A549 (cell line): ENCODE measurements at regions of chr6 and their contacts with region 1.

Region 1: DNA sequence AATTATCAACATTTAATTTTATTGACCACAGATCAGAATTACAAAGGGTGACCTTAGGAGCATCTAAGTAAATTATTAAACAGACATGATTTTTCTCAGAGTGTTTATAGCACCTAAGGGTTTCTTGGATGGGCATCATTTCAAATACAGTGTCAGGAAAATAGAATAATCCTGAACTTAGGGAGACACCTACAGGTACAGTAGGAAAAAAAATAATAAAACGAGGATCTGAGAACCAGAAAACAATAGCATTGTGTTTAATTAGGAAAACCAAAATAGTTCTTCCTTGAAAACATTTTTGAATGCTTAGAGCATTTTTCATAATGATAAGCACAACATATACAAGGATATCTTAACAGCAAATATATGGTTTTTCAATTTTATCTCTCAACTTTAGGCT is 39.2 kb downstream of the MMUT start:
- DNase-seq: peak; percentile 4
- ATAC-seq: no peak
- H3K4me3 ChIP-seq: no peak overlapping the region
- H3K27ac ChIP-seq: no peak overlapping the region
- H3K4me1 ChIP-seq: no peaks in the 10 kb centered on the region
- CTCF ChIP-seq: peak; percentile 54
- EP300 ChIP-seq: no peak
- POLR2A ChIP-seq: no peak
- RAD21 ChIP-seq: peak; percentile 57 to 66

Region 2: DNA sequence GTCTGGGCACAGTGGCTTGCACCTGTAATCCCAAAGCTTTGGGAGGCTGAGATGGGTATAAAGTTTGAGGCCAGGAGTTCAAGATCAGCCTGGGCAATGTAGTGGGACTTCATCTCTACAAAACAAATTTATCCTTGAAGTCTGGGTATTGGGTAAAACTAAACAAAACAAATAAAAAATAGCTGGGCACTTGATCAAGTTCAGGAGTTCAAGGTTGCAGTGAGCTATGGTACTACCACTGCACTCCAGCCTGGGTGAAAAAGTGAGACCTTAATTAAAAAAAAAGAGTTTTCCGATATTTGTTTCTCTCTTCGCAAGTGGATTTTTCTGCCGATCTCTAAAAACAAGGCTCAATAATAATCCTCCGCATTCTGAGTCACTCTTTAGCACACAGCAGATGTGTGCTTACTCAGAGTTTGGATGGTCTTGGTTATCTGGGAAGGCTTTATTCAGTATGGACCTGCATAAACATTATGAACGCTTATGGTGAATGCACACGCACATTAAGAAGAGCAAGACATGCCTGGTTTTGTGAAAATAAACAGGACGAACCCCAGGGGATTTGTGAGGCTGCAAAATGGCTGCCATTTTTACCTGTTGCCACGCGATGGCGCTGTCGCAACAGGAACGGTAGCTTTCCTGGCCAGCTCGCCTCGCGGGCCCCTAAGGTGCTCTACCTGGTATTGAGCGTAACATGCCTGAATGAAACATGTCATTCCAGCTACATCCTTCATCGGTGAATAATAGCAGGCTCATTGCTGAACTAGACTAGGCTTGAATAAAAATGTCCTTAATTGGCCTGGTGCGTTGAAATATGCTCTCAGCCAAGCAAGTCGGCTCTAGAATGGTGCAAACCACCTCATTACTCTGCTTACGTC is 1636.0 kb before region 1 on chr6:
- CTCF ChIA-PET with region 1: interaction called, 27 read pairs
- POLR2A ChIA-PET with region 1: no interaction called
- DNase-seq: peak; percentile 47 to 59
- ATAC-seq: peak; percentile 80 to 92
- H3K4me3 ChIP-seq: no peak overlapping the region
- H3K27ac ChIP-seq: no peak overlapping the region
- H3K4me1 ChIP-seq: no peaks in the 10 kb centered on the region; the same call in 2 of the 3 replicates
- CTCF ChIP-seq: peak; percentile 87
- EP300 ChIP-seq: no peak
- POLR2A ChIP-seq: no peak
- RAD21 ChIP-seq: peak; percentile 92 to 93

Region 3: GRCh38 chr6:49772285-49772684 is 348.5 kb after region 1 on chr6:
- CTCF ChIA-PET with region 1: no interaction called
- POLR2A ChIA-PET with region 1: no interaction called
- DNase-seq: no peak
- ATAC-seq: no peak
- H3K4me3 ChIP-seq: no peak overlapping the region
- H3K27ac ChIP-seq: no peak overlapping the region
- H3K4me1 ChIP-seq: no peaks in the 10 kb centered on the region
- CTCF ChIP-seq: no peak
- EP300 ChIP-seq: no peak
- POLR2A ChIP-seq: no peak
- RAD21 ChIP-seq: no peak